ENCODE measurements at regions of chr1 and their contacts with region 1.

Region 1: DNA sequence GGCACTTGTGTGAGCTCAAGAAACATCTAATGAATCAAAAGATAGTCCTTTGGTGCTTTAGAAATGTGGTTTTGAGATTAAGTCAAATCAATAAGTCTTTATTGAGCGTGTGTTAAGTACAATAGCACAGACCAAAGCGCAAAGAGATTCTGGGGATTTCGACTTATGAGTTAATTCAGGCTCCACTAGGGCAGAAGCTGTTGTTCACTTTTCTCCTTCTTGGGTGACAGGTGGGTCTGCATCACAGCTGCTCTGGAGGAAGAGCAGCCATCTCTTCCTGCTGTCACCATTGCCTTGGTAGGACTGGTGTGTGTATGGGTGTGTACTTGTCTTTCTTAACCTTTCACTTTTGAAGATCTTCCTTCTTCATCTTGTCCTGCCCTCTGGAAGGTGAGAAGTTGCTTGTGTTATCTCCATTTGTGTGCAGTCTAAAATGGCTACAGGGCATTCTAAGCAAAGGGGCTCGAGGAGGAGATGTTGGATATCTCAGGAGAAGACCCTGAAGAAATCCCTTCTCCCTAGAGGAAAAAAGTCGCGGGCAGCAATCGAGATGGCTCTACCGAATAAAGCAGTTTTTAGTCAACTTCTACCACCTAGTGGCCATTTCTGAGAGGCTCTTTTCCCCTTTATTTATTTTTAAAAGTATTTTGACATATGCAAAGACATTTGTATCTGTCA is 22.9 kb upstream of the DISC1 start:
- DNase-seq: peak; percentile 42
- H3K4me3 Mint-ChIP-seq: peak overlapping the region; percentile 85
- H3K27ac Mint-ChIP-seq: peak overlapping the region; percentile 74
- H3K4me1 Mint-ChIP-seq: peaks cover 8% of the 10 kb centered on the region
- H3K27me3 Mint-ChIP-seq: no peaks in the 10 kb centered on the region

Region 2: GRCh38 chr1:230917284-230918135 is 686.2 kb before region 1 on chr1:
- CTCF ChIA-PET with region 1: no interaction called
- intact Hi-C with region 1: loop called (anchors 10 kb)
- DNase-seq: peak; percentile 86
- H3K4me3 Mint-ChIP-seq: no peak overlapping the region
- H3K27ac Mint-ChIP-seq: no peak overlapping the region
- H3K4me1 Mint-ChIP-seq: peaks cover 5% of the 10 kb centered on the region
- H3K27me3 Mint-ChIP-seq: no peaks in the 10 kb centered on the region

Region 3: GRCh38 chr1:231000639-231001038 is 603.1 kb before region 1 on chr1:
- CTCF ChIA-PET with region 1: no interaction called
- intact Hi-C with region 1: no loop called
- DNase-seq: no peak
- H3K4me3 Mint-ChIP-seq: no peak overlapping the region
- H3K27ac Mint-ChIP-seq: no peak overlapping the region
- H3K4me1 Mint-ChIP-seq: no peaks in the 10 kb centered on the region
- H3K27me3 Mint-ChIP-seq: no peaks in the 10 kb centered on the region

Region 4: DNA sequence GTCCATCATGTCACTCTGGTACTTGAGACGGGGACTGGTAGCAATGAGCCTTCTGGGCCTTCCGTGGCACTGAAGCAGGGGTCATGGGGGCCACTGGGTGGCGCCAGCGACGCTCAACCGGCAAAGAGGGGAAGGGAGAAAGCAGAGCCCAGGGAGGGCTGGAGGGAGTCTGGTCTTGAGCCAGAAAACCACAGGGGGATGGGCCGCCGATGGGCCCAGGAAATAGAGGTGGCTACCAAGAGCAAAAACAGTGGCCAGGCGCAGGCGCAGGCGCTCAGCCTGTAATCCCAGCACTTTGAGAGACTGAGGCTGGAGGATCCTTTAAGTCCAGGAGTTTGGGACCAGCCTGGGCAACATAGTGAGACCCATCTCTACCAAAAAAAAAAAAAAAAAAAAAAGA is 287.9 kb before region 1 on chr1:
- CTCF ChIA-PET with region 1: interaction called, 13 read pairs
- intact Hi-C with region 1: loop called (anchors 1 kb)
- DNase-seq: peak; percentile 62
- H3K4me3 Mint-ChIP-seq: no peak overlapping the region
- H3K27ac Mint-ChIP-seq: no peak overlapping the region
- H3K4me1 Mint-ChIP-seq: no peaks in the 10 kb centered on the region
- H3K27me3 Mint-ChIP-seq: no peaks in the 10 kb centered on the region

Region 5: GRCh38 chr1:231357831-231358354 is 245.8 kb before region 1 on chr1:
- CTCF ChIA-PET with region 1: interaction called, 8 read pairs
- intact Hi-C with region 1: loop called (anchors 1 kb)
- DNase-seq: peak; percentile 45
- H3K4me3 Mint-ChIP-seq: no peak overlapping the region
- H3K27ac Mint-ChIP-seq: peak overlapping the region; percentile 16
- H3K4me1 Mint-ChIP-seq: peaks cover 4% of the 10 kb centered on the region
- H3K27me3 Mint-ChIP-seq: no peaks in the 10 kb centered on the region

Region 6: DNA sequence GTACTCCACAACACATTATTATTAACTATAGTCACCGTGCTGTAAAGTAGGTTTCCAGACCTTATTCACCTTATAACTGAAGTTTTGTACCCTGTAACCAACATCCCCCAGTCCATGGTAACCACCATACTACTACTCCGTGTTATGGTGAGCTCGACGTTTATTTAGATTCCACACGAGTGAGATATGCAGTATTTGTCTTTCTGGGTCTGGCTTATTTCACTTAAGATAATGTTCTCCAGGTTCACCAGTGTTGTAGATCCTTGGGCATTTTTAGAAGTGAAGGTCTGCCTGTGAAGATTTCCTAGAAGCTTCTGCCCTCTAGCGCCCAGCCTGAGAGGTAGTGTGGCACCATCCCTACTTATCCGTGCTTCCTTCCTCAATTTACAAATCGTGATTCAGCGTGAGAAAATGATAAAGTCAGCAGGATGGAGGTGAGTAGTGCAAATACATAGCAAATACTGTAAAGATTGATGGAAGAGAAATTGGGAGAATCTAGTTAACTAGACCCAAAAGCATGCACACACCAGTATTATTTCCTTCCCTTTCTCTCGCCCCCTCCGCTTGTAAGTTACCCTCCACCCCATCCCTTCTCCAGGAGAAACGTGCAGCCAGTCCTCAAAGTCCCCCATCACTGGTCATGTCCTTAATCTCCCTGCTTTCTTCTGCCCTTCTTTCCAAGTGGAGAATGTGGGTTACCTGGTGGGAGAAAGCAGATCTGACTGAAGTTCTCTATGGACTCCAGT is 13.1 kb before region 1 on chr1:
- CTCF ChIA-PET with region 1: interaction called, 16 read pairs
- intact Hi-C with region 1: no loop called
- DNase-seq: peak; percentile 68
- H3K4me3 Mint-ChIP-seq: no peak overlapping the region
- H3K27ac Mint-ChIP-seq: no peak overlapping the region
- H3K4me1 Mint-ChIP-seq: peaks cover 6% of the 10 kb centered on the region
- H3K27me3 Mint-ChIP-seq: no peaks in the 10 kb centered on the region

Region 7: DNA sequence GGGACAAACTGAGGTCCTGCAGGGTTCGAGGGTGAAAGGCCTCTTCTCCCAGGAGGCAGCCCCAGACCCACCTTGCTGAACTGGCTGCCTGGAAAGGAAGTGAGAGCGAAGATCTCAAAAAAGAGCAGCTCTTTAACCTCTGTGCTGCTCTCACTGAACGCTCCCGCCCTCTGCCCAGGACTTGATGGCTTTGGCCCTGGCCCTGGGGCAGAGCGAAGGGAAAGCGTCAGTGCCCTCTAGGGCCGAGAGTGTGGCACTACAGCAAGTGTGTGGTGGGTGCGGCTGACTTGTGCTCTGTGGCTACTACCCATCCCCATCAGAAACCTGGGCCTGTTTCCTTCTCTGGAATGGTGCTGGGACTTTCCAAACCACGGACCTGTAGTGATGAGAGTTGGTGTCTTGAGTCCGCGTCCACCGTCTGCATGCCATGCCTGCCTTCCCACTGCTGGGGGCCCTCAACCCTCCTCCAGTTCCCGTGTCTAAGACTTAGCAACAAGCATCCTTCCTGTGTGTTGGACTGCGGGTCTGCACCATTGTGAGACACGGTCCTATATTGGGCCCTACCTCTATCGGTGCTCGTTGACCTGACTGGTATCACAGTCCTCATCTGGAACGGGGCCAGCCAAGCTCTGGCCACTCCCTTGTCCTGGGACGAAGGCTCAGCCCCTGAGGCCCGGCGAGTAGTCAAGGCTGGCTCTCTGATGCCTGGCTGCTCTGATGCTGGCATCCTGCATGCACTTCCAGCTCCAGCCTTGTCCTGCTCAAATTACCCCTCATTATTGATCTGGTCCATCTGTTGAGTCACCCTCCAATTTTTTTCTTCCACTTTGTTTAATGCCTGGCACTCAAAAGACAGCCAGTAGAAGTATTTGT is 203.1 kb after region 1 on chr1:
- CTCF ChIA-PET with region 1: no interaction called
- intact Hi-C with region 1: loop called (anchors 5 kb)
- DNase-seq: peak; percentile 58
- H3K4me3 Mint-ChIP-seq: no peak overlapping the region
- H3K27ac Mint-ChIP-seq: no peak overlapping the region
- H3K4me1 Mint-ChIP-seq: no peaks in the 10 kb centered on the region
- H3K27me3 Mint-ChIP-seq: no peaks in the 10 kb centered on the region